Endothelial cell of umbilical vein (primary cell): ENCODE measurements at regions of chr17 and their contacts with region 1.

Region 1: DNA sequence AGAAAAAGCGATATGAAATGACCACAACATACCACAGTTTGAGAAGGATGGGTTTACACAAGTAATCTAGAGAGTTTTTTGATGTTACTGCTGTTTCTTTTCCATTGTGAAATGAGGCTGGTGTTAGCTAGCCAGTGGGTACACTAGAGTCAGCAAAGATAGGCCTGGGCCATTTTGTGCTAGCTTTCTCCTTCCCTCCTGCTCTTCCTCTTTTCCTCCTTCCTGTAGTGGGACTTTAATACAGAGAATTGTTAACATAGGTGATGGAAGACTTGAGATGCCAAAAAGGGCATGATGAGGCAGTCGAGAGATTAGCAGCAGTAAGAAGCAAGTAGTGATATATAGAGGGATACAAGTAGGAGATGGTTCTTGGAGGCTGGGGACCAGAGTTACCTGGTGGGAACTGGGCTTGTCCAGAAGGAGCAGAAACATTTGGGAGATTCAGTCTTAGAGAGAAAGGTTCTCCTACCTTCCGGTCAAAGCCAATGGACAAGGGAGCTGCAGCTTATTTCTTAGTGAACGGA is 7.7 kb downstream of the NSRP1 start:
- DNase-seq: no peak
- H3K4me3 ChIP-seq: no peak overlapping the region
- H3K27ac ChIP-seq: no peak overlapping the region
- H3K4me1 ChIP-seq: peaks cover 4% of the 10 kb centered on the region
- H3K27me3 ChIP-seq: no peaks in the 10 kb centered on the region
- CTCF ChIP-seq: no peak
- POLR2A ChIP-seq: no peak

Region 2: GRCh38 chr17:30134551-30134950 is 10.2 kb after region 1 on chr17:
- CTCF ChIA-PET with region 1: interaction called, 12 read pairs
- POLR2A ChIA-PET with region 1: no interaction called
- dilution Hi-C with region 1: no loop called
- intact Hi-C with region 1: no loop called
- DNase-seq: no peak
- H3K4me3 ChIP-seq: no peak overlapping the region
- H3K27ac ChIP-seq: no peak overlapping the region
- H3K4me1 ChIP-seq: no peaks in the 10 kb centered on the region
- H3K27me3 ChIP-seq: no peaks in the 10 kb centered on the region
- CTCF ChIP-seq: no peak
- POLR2A ChIP-seq: no peak

Region 3: DNA sequence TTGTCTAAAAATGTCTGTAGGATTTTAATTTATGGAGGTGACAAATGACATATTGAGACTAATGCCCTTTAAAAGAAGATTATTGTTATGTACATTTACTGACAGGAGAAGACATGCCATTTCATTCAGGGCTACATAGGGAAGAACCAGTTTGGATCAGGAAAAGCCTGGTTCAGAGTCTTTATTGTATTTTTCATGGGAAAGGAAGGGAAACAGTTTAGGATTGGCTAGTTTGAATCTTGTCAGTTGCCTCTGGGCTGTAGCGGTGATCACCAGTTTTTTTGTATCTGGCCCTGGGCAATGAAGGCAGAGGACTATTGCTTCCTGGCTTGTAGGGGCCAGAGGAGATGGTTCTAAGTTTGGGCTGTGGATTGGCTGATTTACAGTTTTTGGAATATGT is 24.0 kb after region 1 on chr17:
- CTCF ChIA-PET with region 1: interaction called, 21 read pairs
- POLR2A ChIA-PET with region 1: no interaction called
- dilution Hi-C with region 1: no loop called
- intact Hi-C with region 1: no loop called
- DNase-seq: no peak
- H3K4me3 ChIP-seq: no peak overlapping the region
- H3K27ac ChIP-seq: no peak overlapping the region
- H3K4me1 ChIP-seq: no peaks in the 10 kb centered on the region
- H3K27me3 ChIP-seq: no peaks in the 10 kb centered on the region
- CTCF ChIP-seq: no peak
- POLR2A ChIP-seq: no peak

Region 4: DNA sequence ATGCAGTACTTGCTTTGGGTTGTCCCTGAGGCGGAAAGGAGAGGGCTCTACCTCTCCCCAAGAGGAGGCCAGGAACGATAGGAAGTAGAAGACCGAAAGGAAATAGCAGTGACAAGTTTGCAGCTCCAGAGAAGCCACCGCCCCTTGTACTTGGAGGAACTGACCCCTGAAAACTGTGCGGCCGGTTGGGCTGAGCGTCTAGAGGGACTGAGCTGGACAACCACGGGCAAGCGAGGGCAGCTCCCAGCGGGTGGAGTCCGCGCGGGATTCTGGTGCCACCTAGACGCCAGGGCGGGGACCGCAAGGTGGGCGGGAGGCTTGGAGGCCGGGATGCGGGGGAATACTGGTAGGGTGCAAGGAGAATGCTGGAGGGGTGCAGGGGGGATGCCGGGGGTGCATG is 112.4 kb after region 1 on chr17:
- CTCF ChIA-PET with region 1: interaction called, 73 read pairs
- POLR2A ChIA-PET with region 1: no interaction called
- dilution Hi-C with region 1: no loop called
- intact Hi-C with region 1: loop called (anchors 5 kb)
- DNase-seq: peak; percentile 44
- H3K4me3 ChIP-seq: no peak overlapping the region
- H3K27ac ChIP-seq: no peak overlapping the region
- H3K4me1 ChIP-seq: peaks cover 8% of the 10 kb centered on the region
- H3K27me3 ChIP-seq: peaks cover 51 to 54% of the 10 kb centered on the region in 2 experiments
- CTCF ChIP-seq: peak; percentile 26 to 65
- POLR2A ChIP-seq: no peak

Region 5: GRCh38 chr17:30263552-30264333 is 139.4 kb after region 1 on chr17:
- CTCF ChIA-PET with region 1: interaction called, 15 read pairs
- POLR2A ChIA-PET with region 1: no interaction called
- dilution Hi-C with region 1: no loop called
- intact Hi-C with region 1: no loop called
- DNase-seq: peak; percentile 96
- H3K4me3 ChIP-seq: no peak overlapping the region
- H3K27ac ChIP-seq: peak overlapping the region; percentile 54
- H3K4me1 ChIP-seq: peaks cover 24% of the 10 kb centered on the region
- H3K27me3 ChIP-seq: no peaks in the 10 kb centered on the region
- CTCF ChIP-seq: no peak
- POLR2A ChIP-seq: no peak

Region 6: GRCh38 chr17:30278032-30278431 is 153.7 kb after region 1 on chr17:
- CTCF ChIA-PET with region 1: interaction called, 76 read pairs
- POLR2A ChIA-PET with region 1: no interaction called
- dilution Hi-C with region 1: no loop called
- intact Hi-C with region 1: loop called (anchors 1 kb)
- DNase-seq: peak; percentile 85
- H3K4me3 ChIP-seq: no peak overlapping the region
- H3K27ac ChIP-seq: no peak overlapping the region
- H3K4me1 ChIP-seq: no peaks in the 10 kb centered on the region
- H3K27me3 ChIP-seq: no peaks in the 10 kb centered on the region
- CTCF ChIP-seq: peak; percentile 46 to 55
- POLR2A ChIP-seq: no peak

Region 7: GRCh38 chr17:30299000-30299399 is 174.7 kb after region 1 on chr17:
- CTCF ChIA-PET with region 1: no interaction called
- POLR2A ChIA-PET with region 1: no interaction called
- dilution Hi-C with region 1: no loop called
- intact Hi-C with region 1: no loop called
- DNase-seq: peak; percentile 15
- H3K4me3 ChIP-seq: no peak overlapping the region
- H3K27ac ChIP-seq: no peak overlapping the region
- H3K4me1 ChIP-seq: no peaks in the 10 kb centered on the region
- H3K27me3 ChIP-seq: peaks cover 0 to 2% of the 10 kb centered on the region in 2 experiments
- CTCF ChIP-seq: peak; percentile 8 to 20
- POLR2A ChIP-seq: no peak

Region 8: DNA sequence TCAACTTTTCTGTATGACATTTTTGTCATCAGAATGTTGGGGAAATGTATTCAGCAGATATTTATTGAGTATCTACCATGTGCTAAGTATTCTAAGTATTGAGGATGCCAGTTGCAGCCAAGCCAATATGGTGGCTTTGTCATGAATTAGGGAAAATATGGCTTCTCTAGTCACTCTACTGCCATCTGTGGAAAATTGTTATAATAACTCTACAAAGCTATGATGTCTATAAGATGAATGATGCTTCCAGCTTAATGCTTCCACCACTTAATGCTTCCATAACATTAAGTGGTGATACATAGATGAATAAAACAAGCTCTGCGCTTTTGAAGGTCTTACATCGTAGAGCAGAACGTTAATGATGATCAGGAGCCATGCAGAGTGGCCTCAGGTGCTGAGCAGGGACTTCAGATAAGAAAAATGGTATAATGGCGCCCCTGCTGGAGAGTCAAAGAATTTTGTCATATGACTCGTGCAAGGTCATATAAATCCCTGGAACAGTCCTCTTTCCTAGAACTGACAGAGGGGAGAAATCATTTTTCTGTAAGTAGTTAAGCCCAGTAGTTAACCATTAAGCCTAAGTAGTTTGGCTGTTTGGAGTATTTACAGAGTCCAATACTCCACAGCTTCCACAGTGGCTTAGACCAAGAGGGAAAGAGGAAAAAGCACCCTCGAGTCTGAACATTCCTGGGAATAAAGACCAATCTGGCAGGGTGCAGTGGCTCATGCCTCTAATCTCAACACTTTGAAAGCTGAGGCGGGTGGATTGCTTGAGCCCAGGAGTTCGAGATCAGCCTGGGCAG is 212.2 kb after region 1 on chr17:
- CTCF ChIA-PET with region 1: interaction called, 49 read pairs
- POLR2A ChIA-PET with region 1: no interaction called
- dilution Hi-C with region 1: no loop called
- intact Hi-C with region 1: loop called (anchors 1 kb)
- DNase-seq: peak; percentile 64
- H3K4me3 ChIP-seq: no peak overlapping the region
- H3K27ac ChIP-seq: no peak overlapping the region
- H3K4me1 ChIP-seq: peaks cover 18% of the 10 kb centered on the region
- H3K27me3 ChIP-seq: no peaks in the 10 kb centered on the region
- CTCF ChIP-seq: peak; percentile 42 to 56
- POLR2A ChIP-seq: no peak